ENCODE measurements at regions of chr11 and their contacts with region 1.

Region 1: DNA sequence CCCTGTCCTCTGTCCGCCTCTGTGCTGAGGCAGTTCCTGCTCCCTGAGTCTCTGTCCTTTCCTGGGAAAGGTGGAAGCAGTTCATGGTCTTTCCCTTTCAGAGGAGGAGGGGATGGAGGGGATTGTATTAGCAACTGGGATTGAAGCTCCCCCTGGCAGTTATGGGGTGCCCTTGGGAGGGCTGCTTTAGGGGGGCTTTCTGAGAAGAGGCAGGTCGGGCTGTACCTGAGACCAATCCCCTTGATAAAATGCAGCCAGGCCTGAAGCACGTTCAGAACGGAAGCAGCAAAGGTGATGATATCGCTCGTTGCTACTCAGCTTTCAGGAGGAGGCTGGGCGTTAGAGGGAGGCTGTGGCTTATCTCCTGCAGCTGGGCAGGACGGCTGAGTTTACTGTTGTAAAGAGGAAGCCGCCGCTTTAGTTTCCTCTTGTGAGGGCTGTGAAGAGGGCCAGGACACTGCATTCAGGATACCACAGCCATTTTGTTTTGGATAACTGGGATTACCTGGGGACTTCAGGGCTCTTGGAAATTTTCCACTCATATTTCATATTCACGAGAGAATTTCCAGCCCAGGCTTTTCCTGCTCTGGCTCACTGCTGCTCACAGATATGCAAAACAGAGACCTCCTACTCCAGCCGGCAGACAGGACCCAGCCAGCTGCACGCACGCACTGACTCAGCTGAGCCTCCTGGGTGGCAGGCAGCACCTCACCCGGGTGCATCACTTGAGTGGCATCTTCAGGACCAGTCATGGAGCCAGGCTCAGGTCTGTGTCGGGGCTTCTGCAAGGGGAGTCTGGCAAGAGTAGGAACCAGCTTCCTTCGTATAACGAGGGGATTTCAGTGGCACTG is 798 bp downstream of the AMPD3 start:
- DNase-seq: peak; percentile 93
- H3K4me3 ChIP-seq: peak overlapping the region; percentile 73
- H3K27ac ChIP-seq: peak overlapping the region; percentile 93
- H3K4me1 ChIP-seq: peaks cover 72% of the 10 kb centered on the region
- CTCF ChIP-seq: no peak

Region 2: DNA sequence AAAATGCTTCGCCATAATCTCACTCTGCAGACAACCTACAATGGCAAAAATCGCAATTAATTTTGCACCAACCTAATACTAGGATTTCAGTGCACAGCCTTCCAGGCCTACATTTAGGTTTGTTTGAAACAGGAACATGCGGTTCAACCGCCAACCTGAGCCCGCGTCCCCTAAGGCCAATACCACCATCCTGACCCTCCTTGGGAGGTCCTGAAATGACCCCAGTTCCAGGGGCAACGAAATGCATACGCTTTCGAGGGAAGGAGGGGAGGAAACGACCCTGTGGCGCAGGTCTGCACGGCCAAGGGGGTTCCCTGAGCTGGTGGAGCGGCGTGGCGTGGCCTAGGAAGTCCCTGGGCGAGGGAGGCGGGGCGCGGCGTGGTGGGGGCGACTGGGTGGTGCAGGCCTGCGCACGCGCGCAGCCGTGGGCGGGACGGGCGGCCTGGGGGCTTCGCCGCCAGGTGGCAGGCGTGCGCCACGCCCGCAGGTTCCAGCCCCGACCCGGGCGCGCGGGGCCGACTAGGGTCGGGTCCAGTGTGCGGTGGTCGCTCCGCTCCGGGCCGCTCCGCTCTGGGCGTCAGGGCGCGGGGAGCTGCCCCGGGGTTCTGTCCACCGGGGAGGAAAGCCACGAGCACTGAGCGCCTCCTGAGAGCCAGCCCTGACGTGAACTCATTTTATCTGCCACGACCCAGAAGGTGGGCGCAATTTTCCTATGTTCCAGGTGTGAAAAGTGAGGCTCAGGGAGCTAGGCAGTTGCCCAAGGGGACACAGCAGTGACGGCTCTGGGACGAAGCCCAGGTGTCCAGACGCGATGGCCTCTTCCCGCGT is 697.8 kb before region 1 on chr11:
- CTCF ChIA-PET with region 1: no interaction called
- POLR2A ChIA-PET with region 1: no interaction called
- intact Hi-C with region 1: loop called (anchors 10 kb)
- DNase-seq: peak; percentile 92
- H3K4me3 ChIP-seq: peak overlapping the region; percentile 77
- H3K27ac ChIP-seq: peak overlapping the region; percentile 66
- H3K4me1 ChIP-seq: peaks cover 80% of the 10 kb centered on the region
- CTCF ChIP-seq: peak; percentile 77

Region 3: GRCh38 chr11:10096987-10097386 is 358.9 kb before region 1 on chr11:
- CTCF ChIA-PET with region 1: no interaction called
- POLR2A ChIA-PET with region 1: no interaction called
- intact Hi-C with region 1: no loop called
- DNase-seq: no peak
- H3K4me3 ChIP-seq: no peak overlapping the region
- H3K27ac ChIP-seq: no peak overlapping the region
- H3K4me1 ChIP-seq: no peaks in the 10 kb centered on the region
- CTCF ChIP-seq: no peak

Region 4: DNA sequence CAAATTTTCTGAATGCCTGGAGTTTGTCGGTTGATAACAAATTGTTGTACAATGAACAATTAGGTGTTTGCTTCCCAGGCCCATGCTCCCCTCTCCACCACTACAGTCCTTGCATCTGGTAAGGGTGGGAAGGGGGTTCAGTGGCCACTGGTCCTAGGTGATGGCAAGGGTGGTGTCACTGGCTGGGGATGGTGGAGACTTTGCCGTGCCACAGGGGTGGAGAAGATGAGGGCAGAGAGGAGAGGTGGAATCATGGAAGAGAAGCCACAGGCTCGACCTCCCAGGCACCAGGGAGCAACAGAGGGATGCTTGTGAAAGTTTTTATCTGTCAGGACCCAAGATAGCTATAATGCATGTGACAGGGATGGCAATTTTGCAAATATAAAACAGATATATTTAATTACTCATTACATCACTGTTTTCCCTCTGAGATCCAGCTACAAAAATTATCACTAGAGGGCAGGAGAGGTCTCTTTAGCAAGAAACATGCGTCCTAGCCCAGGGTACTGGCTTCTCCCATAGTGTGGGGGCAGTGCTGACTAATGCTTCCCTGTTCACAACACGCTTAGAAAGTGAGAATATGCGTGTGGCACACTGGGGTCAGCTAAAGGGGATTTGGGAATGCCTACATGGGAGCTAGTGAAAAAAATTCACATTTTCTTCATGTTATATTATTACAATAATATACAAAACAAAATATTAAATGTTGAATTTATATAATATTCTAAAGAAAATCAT is 49.8 kb before region 1 on chr11:
- CTCF ChIA-PET with region 1: no interaction called
- POLR2A ChIA-PET with region 1: interaction called, 5 read pairs
- intact Hi-C with region 1: loop called (anchors 2 kb)
- DNase-seq: peak; percentile 84
- H3K4me3 ChIP-seq: no peak overlapping the region
- H3K27ac ChIP-seq: no peak overlapping the region
- H3K4me1 ChIP-seq: peaks cover 4% of the 10 kb centered on the region
- CTCF ChIP-seq: peak; percentile 93

Region 5: GRCh38 chr11:10540923-10541560 is 85.2 kb after region 1 on chr11 and contains the start of gene RNF141:
- CTCF ChIA-PET with region 1: interaction called, 4 read pairs
- POLR2A ChIA-PET with region 1: interaction called, 24 read pairs
- intact Hi-C with region 1: loop called (anchors 2 kb)
- DNase-seq: peak; percentile 93
- H3K4me3 ChIP-seq: peak within 1 kb of the TSS; percentile 81
- H3K27ac ChIP-seq: no peak within 1 kb of the TSS
- H3K4me1 ChIP-seq: peaks cover 7% of the 10 kb centered on the region
- CTCF ChIP-seq: peak; percentile 78
- total RNA-seq, gene RNF141: 8.2 and 9.2 TPM in 2 replicates

Region 6: DNA sequence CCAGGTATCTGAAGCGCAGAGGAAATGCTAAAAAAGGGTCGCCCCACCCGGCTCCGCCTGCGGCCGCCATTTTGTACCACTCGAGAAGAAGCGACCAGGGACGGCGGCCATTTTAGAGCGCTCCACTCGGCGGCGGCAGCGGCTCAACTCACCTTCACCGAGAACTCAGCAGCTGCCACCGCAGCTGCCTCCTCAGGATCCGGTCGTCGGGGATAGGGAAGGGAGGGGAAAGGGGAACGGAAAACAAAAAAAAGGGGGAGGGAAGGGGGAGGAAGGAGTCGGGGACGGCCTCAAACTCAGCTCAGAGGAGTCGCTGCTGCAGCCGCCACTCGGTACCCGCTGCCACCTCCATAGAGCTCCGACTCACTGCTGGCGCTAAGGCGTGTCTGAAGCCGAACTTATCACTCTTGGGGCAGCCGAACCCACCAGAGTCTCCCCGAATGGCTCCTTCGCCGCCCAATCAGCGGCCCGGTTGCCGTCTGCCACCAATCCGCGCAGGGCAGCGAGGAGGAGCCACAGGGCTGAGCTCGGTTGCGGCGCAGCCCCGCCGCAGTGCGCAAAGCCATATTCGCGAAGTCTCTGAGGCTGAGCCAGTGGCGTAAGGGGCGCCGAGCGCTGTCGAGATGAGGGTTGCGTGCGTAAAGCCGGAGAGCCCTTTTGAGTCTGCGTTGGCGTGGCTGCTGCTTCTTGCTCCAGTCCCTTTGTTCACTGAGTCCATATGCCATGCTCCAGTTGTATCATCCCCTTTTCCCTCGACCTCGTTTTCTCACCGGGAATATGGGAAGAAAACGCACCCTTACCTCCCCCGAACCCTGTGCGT is 352.9 kb after region 1 on chr11 and contains the start of gene EIF4G2:
- CTCF ChIA-PET with region 1: no interaction called
- POLR2A ChIA-PET with region 1: interaction called, 13 read pairs
- intact Hi-C with region 1: no loop called
- DNase-seq: peak; percentile 98
- H3K4me3 ChIP-seq: peak within 1 kb of the TSS; percentile 94
- H3K27ac ChIP-seq: peak within 1 kb of the TSS; percentile 87
- H3K4me1 ChIP-seq: peaks cover 40% of the 10 kb centered on the region
- CTCF ChIP-seq: no peak
- total RNA-seq, gene EIF4G2: 312 and 317 TPM in 2 replicates

Measured in OCI-LY7 (cell line).